ENCODE measurements at regions of chr3 and their contacts with region 1.

Region 1: GRCh38 chr3:3200632-3201212 is 21.2 kb upstream of the CRBN start:
- DNase-seq: peak; percentile 40
- ATAC-seq: peak; percentile 57 to 67

Region 2: GRCh38 chr3:3998140-3998922 is 797.6 kb after region 1 on chr3:
- intact Hi-C with region 1: loop called in 1 of 2 experiments (anchors 5 kb)
- DNase-seq: no peak
- ATAC-seq: no peak

Region 3: GRCh38 chr3:4284865-4285264 is 1084.1 kb after region 1 on chr3:
- intact Hi-C with region 1: loop called (anchors 2 to 5 kb)
- DNase-seq: no peak
- ATAC-seq: no peak

Region 4: GRCh38 chr3:4290272-4290893 is 1089.7 kb after region 1 on chr3:
- intact Hi-C with region 1: loop called (anchors 2 to 5 kb)
- DNase-seq: no peak
- ATAC-seq: no peak